Left cardiac atrium (tissue), 4 donors: ENCODE measurements at regions of chr6 and their contacts with region 1.

Region 1: GRCh38 chr6:152380993-152381898 is 255.9 kb downstream of the SYNE1 start:
- DNase-seq: peak; percentile 85
- ATAC-seq: peak; percentile 89 to 95

Region 2: DNA sequence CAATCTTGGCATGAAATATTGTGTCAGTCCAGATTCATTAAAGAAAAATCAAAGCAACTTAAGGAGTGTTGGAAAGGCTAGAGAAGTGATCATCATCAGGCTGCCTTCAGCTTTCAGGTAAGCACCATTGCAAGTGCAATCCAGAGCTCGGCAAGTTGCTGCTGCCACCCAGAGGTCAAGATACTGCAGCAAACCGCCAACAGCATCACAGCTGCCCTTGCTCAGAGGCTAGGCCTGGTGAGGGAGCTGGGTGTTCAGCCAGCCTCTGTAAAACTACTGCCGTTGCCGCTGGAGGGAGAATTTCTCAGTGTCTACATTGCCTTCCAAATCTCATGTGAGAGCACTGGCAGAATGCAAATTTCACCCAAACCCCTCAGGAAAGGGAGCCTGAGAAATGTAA is 261.7 kb after region 1 on chr6:
- intact Hi-C with region 1: loop called in 1 of 2 experiments (anchors 10 kb)
- DNase-seq: peak; percentile 69
- ATAC-seq: peak; percentile 89 to 98